Activated CD4-positive, alpha-beta T cell treated with anti-CD3 and anti-CD28 coated beads for 36 hours (primary cell): ENCODE measurements at regions of chr18 and their contacts with region 1.

Region 1: GRCh38 chr18:35580701-35581539 is 620 bp upstream of the GALNT1 start:
- DNase-seq: peak; percentile 72
- ATAC-seq: peak; percentile 61
- H3K4me3 Mint-ChIP-seq: peak overlapping the region; percentile 69
- H3K27ac Mint-ChIP-seq: peak overlapping the region; percentile 37
- H3K4me1 Mint-ChIP-seq: peaks cover 35% of the 10 kb centered on the region
- H3K27me3 Mint-ChIP-seq: peaks cover 17% of the 10 kb centered on the region

Region 2: DNA sequence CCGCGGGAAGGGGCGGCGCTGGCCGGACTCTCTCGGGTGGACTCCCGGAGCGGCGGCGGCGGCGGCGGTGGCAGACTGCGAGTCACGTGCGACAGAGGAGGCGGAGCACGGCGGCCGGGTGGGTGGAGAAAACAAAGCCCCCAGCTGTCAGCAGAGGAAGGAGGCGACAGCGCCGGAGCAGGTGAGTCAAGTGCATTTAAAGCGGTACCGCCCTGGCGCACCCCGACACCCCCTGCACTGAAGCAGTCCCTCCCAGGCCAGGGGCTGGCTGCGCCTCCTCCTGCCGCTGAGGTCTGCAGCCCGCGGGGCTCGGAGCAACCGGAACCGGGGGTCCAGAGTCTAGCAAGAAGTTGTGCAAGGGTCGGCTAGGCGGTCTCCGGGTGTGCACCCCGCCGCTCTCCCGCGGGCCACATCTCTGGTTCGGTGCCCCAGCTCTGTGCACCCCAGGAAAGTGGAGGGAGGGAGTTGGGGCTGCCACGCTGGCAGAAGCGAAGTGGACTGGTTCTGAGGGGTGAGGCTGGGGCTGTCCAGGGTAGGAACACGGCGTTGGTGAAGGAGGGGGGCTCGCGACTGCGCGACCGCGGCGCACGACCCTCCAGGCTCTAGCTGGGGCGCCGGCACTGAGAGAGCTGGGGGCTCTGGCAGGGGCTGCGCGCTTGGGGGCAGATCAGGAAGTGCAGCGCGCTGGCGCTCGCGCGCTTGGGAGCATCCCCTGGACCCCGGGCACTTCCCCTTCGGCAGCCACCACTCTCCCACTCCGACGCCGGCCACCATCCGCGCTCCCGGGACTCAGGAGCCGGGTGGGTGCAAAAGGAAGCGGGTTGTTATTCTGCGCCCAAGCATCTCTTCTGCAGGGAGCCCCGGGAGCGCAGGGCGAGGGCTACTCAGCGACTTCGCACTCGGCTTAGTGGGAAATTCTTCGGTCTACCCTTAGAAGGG is 603.8 kb before region 1 on chr18:
- CTCF ChIA-PET with region 1: no interaction called
- POLR2A ChIA-PET with region 1: no interaction called
- intact Hi-C with region 1: loop called in 1 of 2 experiments (anchors 5 kb)
- DNase-seq: peak; percentile 85
- ATAC-seq: peak; percentile 55
- H3K4me3 Mint-ChIP-seq: peak overlapping the region; percentile 73
- H3K27ac Mint-ChIP-seq: no peak overlapping the region
- H3K4me1 Mint-ChIP-seq: peaks cover 23% of the 10 kb centered on the region
- H3K27me3 Mint-ChIP-seq: peaks cover 32% of the 10 kb centered on the region

Region 3: DNA sequence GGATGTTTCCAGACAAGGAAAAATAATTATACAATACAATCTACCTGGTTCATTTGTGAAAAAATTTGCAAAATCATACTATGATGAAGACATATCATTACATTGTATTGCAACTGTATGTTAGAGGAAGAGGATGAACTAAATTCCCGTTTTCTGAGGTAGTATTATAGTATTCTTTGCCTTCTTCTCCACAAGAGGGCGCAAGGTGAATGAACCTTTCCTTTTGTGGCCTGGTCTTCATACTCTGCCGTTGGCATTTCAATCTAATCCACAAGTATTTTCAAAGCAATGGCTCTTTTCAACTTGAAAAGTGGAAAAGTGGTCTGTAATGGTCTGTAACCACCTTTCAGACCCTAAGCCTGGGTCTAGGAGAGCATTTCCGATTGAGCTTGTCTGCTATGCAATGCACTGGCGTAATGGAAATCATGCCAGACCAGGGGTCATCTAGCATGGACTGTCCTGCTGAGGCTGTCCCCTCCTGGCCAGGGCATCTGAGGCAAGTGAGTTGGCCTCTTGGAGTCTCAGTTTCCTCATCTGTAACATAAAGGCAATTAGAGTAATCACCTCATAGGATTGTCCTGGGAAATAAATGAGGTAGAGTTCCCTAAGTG is 172.9 kb before region 1 on chr18:
- CTCF ChIA-PET with region 1: interaction called, 3 read pairs
- POLR2A ChIA-PET with region 1: no interaction called
- intact Hi-C with region 1: loop called (anchors 1 to 5 kb)
- DNase-seq: peak; percentile 49
- ATAC-seq: peak; percentile 92
- H3K4me3 Mint-ChIP-seq: no peak overlapping the region
- H3K27ac Mint-ChIP-seq: no peak overlapping the region
- H3K4me1 Mint-ChIP-seq: peaks cover 10% of the 10 kb centered on the region
- H3K27me3 Mint-ChIP-seq: peaks cover 6% of the 10 kb centered on the region

Region 4: DNA sequence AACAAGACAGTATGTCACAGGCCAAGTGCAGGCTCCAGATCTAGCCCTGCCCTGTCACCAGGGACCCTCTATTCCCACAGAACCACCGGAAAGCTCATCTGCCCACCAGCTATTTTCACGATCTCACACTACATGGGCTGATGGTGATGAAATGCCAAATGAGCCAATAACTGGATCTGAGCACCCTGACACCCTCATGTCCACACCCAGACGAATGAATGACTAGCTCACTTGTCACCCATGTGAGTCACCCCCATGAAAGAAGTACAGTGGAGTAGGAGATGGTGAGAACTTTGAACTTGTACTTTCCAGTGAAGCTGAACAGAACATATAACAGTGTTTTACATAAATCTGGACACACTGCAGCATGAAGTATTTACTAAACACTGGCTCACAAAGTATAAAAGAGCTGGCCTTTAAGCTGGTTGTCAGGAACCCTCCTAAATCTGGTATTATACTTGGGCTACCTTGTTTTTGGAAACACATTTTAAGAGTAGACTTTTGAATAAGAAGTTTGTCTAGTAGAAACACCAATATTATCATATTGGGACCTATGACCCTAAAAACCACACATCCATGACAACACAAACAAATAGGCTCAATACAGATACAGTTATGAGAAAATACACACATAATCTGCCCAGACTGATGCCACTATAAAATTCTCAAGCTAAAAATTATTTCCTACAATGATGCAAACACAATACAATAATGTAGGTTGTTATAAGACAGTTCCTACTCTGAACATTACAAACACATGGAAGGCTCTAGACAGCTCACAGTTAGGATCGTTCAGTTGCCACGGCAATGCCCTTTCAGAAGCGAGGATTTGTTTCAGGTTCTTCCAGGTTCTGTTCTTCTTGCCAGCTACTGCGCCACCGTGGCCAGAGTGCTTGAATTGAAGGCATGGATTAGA is 102.1 kb before region 1 on chr18:
- CTCF ChIA-PET with region 1: no interaction called
- POLR2A ChIA-PET with region 1: no interaction called
- intact Hi-C with region 1: loop called in 1 of 2 experiments (anchors 1 kb)
- DNase-seq: peak; percentile 65
- ATAC-seq: peak; percentile 100
- H3K4me3 Mint-ChIP-seq: peak overlapping the region; percentile 22
- H3K27ac Mint-ChIP-seq: peak overlapping the region; percentile 55
- H3K4me1 Mint-ChIP-seq: peaks cover 40% of the 10 kb centered on the region
- H3K27me3 Mint-ChIP-seq: no peaks in the 10 kb centered on the region

Region 5: DNA sequence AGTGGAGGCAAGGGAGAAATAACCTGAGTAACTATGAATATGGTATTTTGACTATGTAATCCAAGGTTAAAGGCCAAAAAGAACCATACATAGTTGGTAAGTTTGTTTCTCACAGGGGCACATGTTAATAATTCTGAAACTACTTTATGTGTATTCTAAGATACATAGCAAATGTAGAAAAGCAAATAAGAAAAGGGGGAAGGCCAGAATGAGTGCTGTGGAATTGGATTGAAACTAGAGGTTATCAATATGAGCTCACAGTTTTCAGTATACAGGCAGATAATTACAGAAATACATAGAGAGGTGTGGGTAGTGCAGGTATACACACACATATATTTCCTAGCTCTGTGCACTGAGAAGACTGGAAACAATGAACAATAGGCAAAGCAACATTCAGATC is 96.9 kb before region 1 on chr18:
- CTCF ChIA-PET with region 1: no interaction called
- POLR2A ChIA-PET with region 1: no interaction called
- intact Hi-C with region 1: loop called in 1 of 2 experiments (anchors 2 kb)
- DNase-seq: no peak
- ATAC-seq: peak; percentile 95
- H3K4me3 Mint-ChIP-seq: no peak overlapping the region
- H3K27ac Mint-ChIP-seq: no peak overlapping the region
- H3K4me1 Mint-ChIP-seq: peaks cover 47% of the 10 kb centered on the region
- H3K27me3 Mint-ChIP-seq: no peaks in the 10 kb centered on the region

Region 6: DNA sequence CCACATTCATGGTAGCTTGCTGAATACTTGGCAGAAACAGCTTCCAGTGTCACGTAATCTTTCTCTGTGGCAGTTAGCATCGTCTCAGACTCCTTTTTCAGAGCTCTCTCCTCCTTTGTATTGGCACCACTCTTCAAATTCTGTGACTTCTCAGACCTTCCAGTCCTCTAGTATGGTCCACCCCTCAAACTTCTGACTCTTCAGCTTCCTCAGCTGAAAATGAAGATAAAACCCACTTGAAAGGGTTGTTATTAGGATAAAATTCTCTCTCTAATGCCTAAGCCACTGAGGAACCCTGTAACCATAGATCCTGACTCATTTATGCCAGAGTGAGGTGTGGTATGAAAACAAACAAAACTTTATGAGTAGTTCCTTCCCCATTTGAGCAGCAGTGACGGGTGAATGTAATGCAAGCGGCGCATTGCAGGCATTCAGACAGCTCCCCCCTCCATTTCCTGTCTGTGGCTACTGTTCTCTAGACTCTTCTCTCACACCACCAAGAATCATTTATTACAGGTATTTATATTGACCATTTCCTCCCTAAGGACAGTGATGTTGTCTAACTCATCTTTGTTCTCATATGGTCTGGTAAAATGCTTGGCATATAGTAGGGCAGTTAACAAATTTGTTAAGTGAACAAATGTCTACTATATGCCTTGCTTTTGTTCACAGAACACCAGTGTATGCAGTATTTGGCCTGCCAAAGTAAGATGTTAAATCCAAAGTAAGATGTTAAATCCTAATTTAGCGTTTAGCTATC is 35.9 kb after region 1 on chr18:
- CTCF ChIA-PET with region 1: interaction called, 3 read pairs
- POLR2A ChIA-PET with region 1: no interaction called
- intact Hi-C with region 1: loop called (anchors 1 kb)
- DNase-seq: peak; percentile 81
- ATAC-seq: peak; percentile 94
- H3K4me3 Mint-ChIP-seq: no peak overlapping the region
- H3K27ac Mint-ChIP-seq: no peak overlapping the region
- H3K4me1 Mint-ChIP-seq: peaks cover 16% of the 10 kb centered on the region
- H3K27me3 Mint-ChIP-seq: no peaks in the 10 kb centered on the region

Region 7: DNA sequence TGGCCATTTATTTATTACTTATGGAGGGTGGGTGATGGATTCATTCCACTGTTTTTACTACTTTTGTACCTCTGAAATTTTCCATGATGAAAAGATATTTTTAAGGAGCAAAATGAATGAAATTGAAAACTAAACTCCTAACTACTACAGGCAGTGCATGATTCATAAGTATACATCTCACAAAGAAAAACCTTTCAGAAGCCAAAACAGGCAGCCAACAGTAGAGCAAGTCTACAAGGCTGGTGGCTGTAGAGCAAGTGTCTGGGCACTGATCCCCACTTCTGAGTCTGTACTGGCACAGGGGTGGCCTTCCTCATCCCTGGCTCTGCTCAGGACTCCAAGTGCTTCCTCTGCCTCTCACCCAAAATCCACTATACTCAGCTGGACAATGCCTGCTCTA is 383.4 kb after region 1 on chr18:
- CTCF ChIA-PET with region 1: no interaction called
- POLR2A ChIA-PET with region 1: no interaction called
- intact Hi-C with region 1: no loop called
- DNase-seq: no peak
- ATAC-seq: peak; percentile 85
- H3K4me3 Mint-ChIP-seq: no peak overlapping the region
- H3K27ac Mint-ChIP-seq: peak overlapping the region; percentile 77
- H3K4me1 Mint-ChIP-seq: peaks cover 22% of the 10 kb centered on the region
- H3K27me3 Mint-ChIP-seq: no peaks in the 10 kb centered on the region